Activated naive CD4-positive, alpha-beta T cell treated with anti-CD3 and anti-CD28 coated beads for 36 hours (primary cell): ENCODE measurements at regions of chr22 and their contacts with region 1.

Region 1: DNA sequence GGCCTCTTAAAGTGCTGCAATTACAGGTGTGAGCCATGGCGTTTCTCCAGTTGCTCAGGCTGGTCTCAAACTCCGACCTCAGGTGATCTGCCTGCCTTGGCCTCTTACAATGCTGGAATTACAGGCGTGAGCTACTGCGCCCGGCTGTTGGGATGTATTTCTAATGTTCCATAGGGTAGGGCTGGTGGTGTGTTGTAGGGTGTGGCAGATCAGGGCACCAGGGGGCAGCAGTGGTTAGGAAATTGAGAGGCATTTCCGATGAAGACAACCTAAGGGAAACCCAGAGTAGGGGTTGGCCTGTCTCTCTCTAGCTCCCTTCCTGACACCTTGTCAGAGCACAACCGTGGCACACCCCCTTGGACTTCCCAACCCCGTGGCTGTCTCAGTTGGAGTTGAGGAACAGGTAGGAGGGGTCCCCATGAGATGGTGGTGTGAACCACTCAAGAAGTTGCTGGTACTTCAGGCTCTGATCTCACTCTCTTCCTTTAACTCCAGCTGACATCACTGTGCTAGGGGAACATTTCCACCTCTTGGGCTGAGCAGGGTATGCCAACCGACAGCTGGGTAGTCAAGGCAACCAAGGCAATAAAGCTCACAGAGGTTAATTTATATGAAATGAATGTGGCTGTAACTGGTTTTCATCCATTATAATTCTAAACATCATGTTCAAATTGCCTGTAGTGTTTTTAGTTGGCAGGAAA is 33.0 kb downstream of the YWHAH start:
- DNase-seq: peak; percentile 93
- H3K4me3 Mint-ChIP-seq: no peak overlapping the region
- H3K27ac Mint-ChIP-seq: no peak overlapping the region
- H3K4me1 Mint-ChIP-seq: peaks cover 5% of the 10 kb centered on the region
- H3K27me3 Mint-ChIP-seq: no peaks in the 10 kb centered on the region

Region 2: GRCh38 chr22:32020117-32020516 is 42.8 kb after region 1 on chr22:
- CTCF ChIA-PET with region 1: no interaction called
- intact Hi-C with region 1: loop called (anchors 2 kb)
- DNase-seq: no peak
- H3K4me3 Mint-ChIP-seq: no peak overlapping the region
- H3K27ac Mint-ChIP-seq: no peak overlapping the region
- H3K4me1 Mint-ChIP-seq: peaks cover 9% of the 10 kb centered on the region
- H3K27me3 Mint-ChIP-seq: peaks cover 14% of the 10 kb centered on the region

Region 3: DNA sequence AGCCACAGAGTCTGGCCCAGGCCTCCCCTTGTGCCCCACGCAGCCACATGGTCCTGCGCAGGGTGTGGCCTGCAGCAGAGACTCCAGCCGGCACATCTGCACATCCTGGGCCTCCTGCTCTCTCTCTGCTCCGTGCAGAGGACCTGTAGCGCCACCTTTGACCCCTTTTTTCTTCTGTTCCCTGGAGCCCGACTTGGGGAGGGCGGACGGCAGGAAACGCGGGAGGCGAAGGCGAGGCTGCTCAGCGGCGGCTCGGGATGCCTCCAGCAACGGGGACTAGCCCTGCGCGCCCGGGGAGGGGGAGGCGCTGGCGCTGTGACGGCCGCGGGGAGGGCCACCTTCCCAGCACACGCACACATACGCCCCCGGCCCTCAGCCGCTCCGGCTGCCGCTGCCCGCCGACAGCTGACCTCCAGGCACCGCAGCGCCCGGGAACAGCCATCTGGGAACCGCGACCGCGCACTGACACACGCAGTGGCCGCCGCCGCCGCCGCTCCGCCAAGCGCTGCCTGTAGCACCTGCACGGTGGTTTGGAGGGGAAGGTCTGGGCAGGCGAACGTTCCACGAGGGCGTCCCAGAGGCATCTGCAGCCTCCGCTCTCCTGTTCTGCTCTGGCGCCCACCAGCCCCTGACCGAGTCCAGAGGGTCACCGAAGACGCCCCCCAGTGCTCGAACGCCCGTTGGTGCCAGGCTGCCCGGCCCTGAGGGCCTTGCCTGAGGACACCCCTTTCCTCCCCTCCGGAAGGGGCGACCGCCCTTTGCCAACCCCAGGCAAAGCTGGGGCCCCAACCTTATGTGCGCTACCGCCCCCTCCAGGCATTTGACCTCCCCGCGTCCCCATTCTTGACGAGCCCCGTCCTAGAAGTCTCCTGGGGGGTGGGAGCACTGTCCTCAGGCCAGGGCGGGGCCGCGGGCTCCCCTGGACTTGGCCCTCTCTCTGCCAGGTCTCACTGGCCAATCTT is 198.7 kb after region 1 on chr22:
- CTCF ChIA-PET with region 1: no interaction called
- intact Hi-C with region 1: loop called (anchors 5 kb)
- DNase-seq: peak; percentile 5
- H3K4me3 Mint-ChIP-seq: no peak overlapping the region
- H3K27ac Mint-ChIP-seq: no peak overlapping the region
- H3K4me1 Mint-ChIP-seq: no peaks in the 10 kb centered on the region
- H3K27me3 Mint-ChIP-seq: peaks cover 26% of the 10 kb centered on the region

Region 4: GRCh38 chr22:32265882-32266767 is 288.8 kb after region 1 on chr22:
- CTCF ChIA-PET with region 1: interaction called, 26 read pairs
- intact Hi-C with region 1: loop called (anchors 1 kb)
- DNase-seq: peak; percentile 84
- H3K4me3 Mint-ChIP-seq: no peak overlapping the region
- H3K27ac Mint-ChIP-seq: no peak overlapping the region
- H3K4me1 Mint-ChIP-seq: peaks cover 8% of the 10 kb centered on the region
- H3K27me3 Mint-ChIP-seq: no peaks in the 10 kb centered on the region

Region 5: GRCh38 chr22:32518848-32519247 is 541.6 kb after region 1 on chr22:
- CTCF ChIA-PET with region 1: no interaction called
- intact Hi-C with region 1: loop called (anchors 5 kb)
- DNase-seq: peak; percentile 30
- H3K4me3 Mint-ChIP-seq: no peak overlapping the region
- H3K27ac Mint-ChIP-seq: no peak overlapping the region
- H3K4me1 Mint-ChIP-seq: no peaks in the 10 kb centered on the region
- H3K27me3 Mint-ChIP-seq: no peaks in the 10 kb centered on the region